Mammary epithelial cell (primary cell): ENCODE measurements at regions of chr11 and their contacts with region 1.

Region 1: DNA sequence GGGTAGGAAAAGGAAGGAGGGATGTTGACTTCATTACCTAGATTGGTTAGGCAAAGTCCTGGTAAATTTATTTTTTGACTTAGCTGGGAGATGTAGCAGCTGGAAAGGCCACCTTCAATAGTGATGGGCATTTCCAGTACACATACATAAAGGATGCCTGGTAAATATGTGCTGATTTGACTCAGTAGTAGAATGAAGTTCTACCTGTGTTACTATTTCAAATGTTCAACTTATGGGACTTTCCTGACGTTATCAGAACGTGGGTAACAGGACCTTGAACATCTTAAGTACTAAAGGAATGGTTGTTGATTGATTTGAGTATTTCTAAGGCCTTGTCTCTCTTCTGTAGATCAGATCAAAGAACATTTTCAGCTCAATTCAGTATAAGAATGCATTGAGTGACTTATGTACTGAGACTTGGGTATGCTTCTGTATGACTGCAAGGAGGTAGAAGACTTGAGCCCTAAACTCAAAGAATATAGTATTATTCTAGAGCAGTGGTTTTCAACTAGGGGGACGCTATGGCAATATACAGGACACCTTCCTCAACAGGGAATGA is 27.1 kb downstream of the RNF121 start:
- DNase-seq: no peak
- H3K4me3 ChIP-seq: no peak overlapping the region
- H3K27ac ChIP-seq: no peak overlapping the region
- H3K4me1 ChIP-seq: no peaks in the 10 kb centered on the region
- H3K27me3 ChIP-seq: no peaks in the 10 kb centered on the region
- CTCF ChIP-seq: no peak

Region 2: DNA sequence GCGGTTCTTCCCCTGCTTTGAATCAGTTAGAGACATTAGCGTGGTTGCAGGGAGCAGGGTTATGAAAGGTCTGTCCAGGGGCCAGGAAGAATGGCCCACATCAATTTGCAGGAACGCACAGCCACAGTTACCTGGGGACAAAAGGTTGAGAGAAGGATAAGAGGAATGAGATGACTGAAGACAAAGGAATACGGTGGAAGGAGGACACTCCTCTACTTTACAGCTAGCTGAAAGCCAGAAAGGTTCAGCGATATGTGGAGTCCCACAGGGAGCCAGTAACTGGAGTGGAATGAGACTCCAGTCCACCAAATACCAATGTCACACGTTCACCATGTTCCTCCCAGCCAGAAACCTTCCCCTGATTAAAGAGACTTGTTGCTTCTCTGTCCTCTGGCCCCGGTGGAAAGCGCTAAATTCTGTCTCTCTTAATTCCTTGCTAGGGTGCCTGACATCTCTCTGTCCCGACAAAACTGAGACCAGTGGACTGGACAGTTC is 38.3 kb before region 1 on chr11:
- CTCF ChIA-PET with region 1: no interaction called
- dilution Hi-C with region 1: no loop called
- in situ Hi-C with region 1: no loop called
- intact Hi-C with region 1: no loop called
- DNase-seq: no peak
- H3K4me3 ChIP-seq: no peak overlapping the region
- H3K27ac ChIP-seq: no peak overlapping the region
- H3K4me1 ChIP-seq: no peaks in the 10 kb centered on the region
- H3K27me3 ChIP-seq: no peaks in the 10 kb centered on the region
- CTCF ChIP-seq: no peak

Region 3: DNA sequence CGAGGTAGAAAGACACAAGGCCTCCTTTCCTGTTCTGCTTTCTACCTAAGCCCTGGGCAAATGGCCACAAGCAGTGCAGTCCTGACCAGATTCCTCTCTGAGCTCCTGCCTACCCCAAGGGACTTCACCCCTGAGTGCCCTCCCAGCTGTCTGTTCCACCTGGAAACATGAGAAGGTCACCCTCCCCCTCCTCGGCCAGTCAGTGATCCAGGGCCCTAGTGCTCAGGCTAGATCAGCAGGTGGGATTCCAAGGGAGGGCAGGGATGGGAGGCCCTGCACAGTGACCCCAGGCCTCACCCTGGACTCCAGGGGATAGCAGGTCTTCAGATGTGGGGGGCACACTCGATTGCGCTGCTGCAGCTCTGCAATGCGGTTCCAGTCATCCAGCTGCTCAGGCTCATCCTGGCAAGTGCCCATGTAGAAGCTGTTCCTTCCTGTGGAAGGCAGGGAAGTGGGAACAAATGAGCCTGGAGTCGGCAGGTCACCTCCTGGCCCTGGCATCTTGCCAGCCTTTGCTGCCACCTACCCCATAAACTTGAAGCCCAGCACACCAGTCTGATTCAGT is 49.0 kb after region 1 on chr11:
- CTCF ChIA-PET with region 1: no interaction called
- dilution Hi-C with region 1: loop called (anchors 5 kb)
- in situ Hi-C with region 1: no loop called
- intact Hi-C with region 1: no loop called
- DNase-seq: no peak
- H3K4me3 ChIP-seq: no peak overlapping the region
- H3K27ac ChIP-seq: no peak overlapping the region
- H3K4me1 ChIP-seq: no peaks in the 10 kb centered on the region
- H3K27me3 ChIP-seq: no peaks in the 10 kb centered on the region
- CTCF ChIP-seq: no peak

Region 4: DNA sequence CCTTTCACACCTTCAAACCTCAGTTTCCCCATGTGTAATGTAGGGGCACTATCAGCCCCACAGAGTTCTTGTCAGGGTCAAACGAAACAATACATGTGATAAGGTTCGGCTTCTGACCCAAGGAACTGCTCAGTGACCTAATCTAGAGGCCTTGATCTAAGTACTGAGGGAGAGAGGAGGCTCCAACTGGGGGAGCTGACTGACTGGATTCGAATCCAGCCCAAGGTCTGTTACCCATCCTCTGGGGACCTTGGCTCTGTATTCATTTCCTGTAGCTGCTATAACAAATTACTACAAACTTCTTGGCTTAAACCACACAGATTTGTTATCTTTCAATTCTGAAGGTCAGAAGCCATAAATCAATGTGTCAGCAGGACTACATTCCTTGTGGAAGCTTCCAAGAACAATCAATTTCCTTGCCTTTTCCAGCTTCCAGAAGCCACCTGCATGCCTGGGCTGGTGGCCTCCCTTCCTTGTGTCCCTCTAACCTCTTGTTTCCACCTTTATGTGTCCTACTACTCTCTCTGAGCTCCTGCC is 167.2 kb after region 1 on chr11:
- CTCF ChIA-PET with region 1: no interaction called
- dilution Hi-C with region 1: no loop called
- in situ Hi-C with region 1: no loop called
- intact Hi-C with region 1: no loop called
- DNase-seq: no peak
- H3K4me3 ChIP-seq: no peak overlapping the region
- H3K27ac ChIP-seq: no peak overlapping the region
- H3K4me1 ChIP-seq: no peaks in the 10 kb centered on the region
- H3K27me3 ChIP-seq: no peaks in the 10 kb centered on the region
- CTCF ChIP-seq: no peak